ENCODE measurements at regions of chr22 and their contacts with region 1.

Region 1: GRCh38 chr22:44133901-44134571 is 46.7 kb upstream of the PARVG start:
- DNase-seq: no peak
- ATAC-seq: peak; percentile 19

Region 2: DNA sequence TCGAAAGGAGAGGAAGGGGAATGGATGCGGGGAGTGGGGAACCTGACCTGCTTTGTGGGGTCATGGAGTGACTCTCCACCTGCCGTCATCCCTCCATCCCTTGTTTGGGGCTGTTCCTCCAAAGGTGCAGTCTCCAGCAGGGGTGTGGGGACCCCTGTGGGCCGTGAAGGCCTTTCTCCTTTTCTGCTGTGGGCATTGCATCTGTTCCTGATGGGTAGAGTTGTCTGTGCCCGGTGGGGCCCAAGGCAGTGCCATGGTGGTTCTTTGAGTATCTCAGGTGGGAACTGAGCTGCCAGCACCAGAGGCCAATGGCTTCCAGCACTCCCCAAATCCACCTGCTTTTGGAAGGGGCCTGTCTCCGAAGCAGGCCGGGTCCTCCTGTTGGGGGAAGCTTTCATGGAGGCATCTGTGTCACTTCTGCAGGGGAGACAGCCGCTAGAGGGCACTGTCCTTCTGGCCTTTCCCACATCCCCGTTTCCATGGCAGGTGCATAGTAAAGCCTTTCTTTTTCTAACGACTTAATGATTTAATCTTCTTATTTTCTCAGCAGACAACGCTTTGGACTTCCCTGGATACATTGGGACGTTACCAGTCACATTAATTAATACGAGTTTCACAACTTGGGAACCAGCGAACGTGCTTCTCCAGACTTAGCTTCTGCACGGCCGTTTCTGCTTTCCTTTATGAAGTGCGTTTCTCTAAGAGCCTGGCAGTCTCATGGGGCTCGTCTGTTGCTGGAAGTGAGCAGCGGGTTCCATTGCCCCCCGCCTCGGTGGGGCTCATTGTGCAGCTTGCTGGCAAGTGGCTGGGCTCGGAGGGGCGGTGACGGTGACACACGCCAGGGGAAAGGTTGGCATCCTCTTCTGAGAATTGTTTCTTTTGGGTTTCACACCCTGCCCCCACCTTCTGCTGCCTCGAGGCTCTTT is 52.8 kb before region 1 on chr22:
- intact Hi-C with region 1: loop called (anchors 10 kb)
- DNase-seq: peak; percentile 86
- ATAC-seq: no peak

Region 3: DNA sequence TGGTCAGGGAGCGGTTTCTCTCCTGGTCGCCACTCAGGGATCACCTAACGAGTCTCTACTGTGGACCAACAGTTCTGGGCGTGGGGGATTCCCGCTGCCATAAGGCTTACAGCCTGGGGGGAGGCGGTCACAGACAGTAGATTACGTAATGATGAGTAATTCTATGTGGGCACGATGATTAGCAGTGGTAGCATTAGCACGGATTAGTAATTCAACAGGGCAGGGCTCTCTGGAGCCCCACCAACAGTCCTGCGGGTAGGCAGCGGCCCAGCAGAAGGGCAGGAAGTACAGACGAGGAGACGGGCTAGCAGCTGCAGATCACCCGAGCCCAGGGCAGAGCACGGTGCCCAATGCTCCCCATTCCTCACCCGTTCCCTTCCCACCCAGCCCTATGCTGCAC is 175.1 kb after region 1 on chr22:
- intact Hi-C with region 1: no loop called
- DNase-seq: peak; percentile 51
- ATAC-seq: peak; percentile 29